B cell (primary cell): ENCODE measurements at regions of chr15 and their contacts with region 1.

Region 1: GRCh38 chr15:90320061-90320884 is 31.8 kb upstream of the ZNF774 start:
- DNase-seq: peak; percentile 84
- ATAC-seq: peak; percentile 98
- H3K4me3 ChIP-seq: peak overlapping the region in 1 of 5 experiments; percentile 9
- H3K4me3 Mint-ChIP-seq: peak overlapping the region; percentile 2
- H3K27ac ChIP-seq: no peak overlapping the region
- H3K27ac Mint-ChIP-seq: no peak overlapping the region
- H3K4me1 ChIP-seq: peaks cover 3 to 7% of the 10 kb centered on the region in 2 donors
- H3K4me1 Mint-ChIP-seq: peaks cover 5% of the 10 kb centered on the region
- H3K27me3 ChIP-seq: no peaks in the 10 kb centered on the region
- H3K27me3 Mint-ChIP-seq: no peaks in the 10 kb centered on the region
- CTCF ChIP-seq: peak; percentile 95

Region 2: GRCh38 chr15:90221246-90221900 is 98.9 kb before region 1 on chr15:
- CTCF ChIA-PET with region 1: no interaction called
- POLR2A ChIA-PET with region 1: no interaction called
- intact Hi-C with region 1: no loop called
- DNase-seq: no peak
- ATAC-seq: no peak
- H3K4me3 ChIP-seq: no peak overlapping the region
- H3K4me3 Mint-ChIP-seq: peak overlapping the region; percentile 23
- H3K27ac ChIP-seq: peak overlapping the region in 1 of 2 donors; percentile 39
- H3K27ac Mint-ChIP-seq: peak overlapping the region; percentile 72
- H3K4me1 ChIP-seq: peaks cover 41 to 50% of the 10 kb centered on the region in 2 donors
- H3K4me1 Mint-ChIP-seq: peaks cover 52% of the 10 kb centered on the region
- H3K27me3 ChIP-seq: no peaks in the 10 kb centered on the region
- H3K27me3 Mint-ChIP-seq: no peaks in the 10 kb centered on the region
- CTCF ChIP-seq: peak; percentile 36

Region 3: DNA sequence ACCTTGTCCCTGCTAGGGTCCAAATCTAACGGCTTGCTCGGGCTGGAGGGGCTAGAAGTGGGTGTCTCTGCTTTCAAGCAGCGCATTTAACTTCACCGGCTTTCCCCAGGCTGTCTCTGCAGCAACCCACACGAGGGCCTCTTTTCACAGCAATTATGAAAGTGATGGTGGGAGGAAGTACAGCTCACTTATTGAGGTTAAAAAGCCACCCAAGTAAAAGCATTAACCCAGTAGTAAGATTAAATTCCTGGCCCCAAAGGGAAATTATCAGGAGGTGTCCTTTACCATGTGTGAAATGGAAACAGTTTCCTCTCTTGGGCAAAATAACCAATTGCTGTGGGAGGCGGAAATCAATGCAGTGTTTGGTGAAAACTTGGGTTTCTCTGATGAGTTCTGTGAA is 13.7 kb before region 1 on chr15:
- CTCF ChIA-PET with region 1: interaction called, 48 read pairs
- POLR2A ChIA-PET with region 1: no interaction called
- intact Hi-C with region 1: no loop called
- DNase-seq: no peak
- ATAC-seq: no peak
- H3K4me3 ChIP-seq: no peak overlapping the region
- H3K4me3 Mint-ChIP-seq: no peak overlapping the region
- H3K27ac ChIP-seq: no peak overlapping the region
- H3K27ac Mint-ChIP-seq: peak overlapping the region; percentile 15
- H3K4me1 ChIP-seq: peaks cover 7 to 9% of the 10 kb centered on the region in 2 donors
- H3K4me1 Mint-ChIP-seq: peaks cover 12% of the 10 kb centered on the region
- H3K27me3 ChIP-seq: no peaks in the 10 kb centered on the region
- H3K27me3 Mint-ChIP-seq: no peaks in the 10 kb centered on the region
- CTCF ChIP-seq: no peak

Region 4: GRCh38 chr15:90362936-90363212 is 42.6 kb after region 1 on chr15:
- CTCF ChIA-PET with region 1: interaction called, 18 read pairs
- POLR2A ChIA-PET with region 1: no interaction called
- intact Hi-C with region 1: no loop called
- DNase-seq: no peak
- ATAC-seq: no peak
- H3K4me3 ChIP-seq: no peak overlapping the region
- H3K4me3 Mint-ChIP-seq: no peak overlapping the region
- H3K27ac ChIP-seq: no peak overlapping the region
- H3K27ac Mint-ChIP-seq: no peak overlapping the region
- H3K4me1 ChIP-seq: peaks cover 5 to 9% of the 10 kb centered on the region in 2 donors
- H3K4me1 Mint-ChIP-seq: peaks cover 4% of the 10 kb centered on the region
- H3K27me3 ChIP-seq: no peaks in the 10 kb centered on the region
- H3K27me3 Mint-ChIP-seq: no peaks in the 10 kb centered on the region
- CTCF ChIP-seq: no peak

Region 5: GRCh38 chr15:90451053-90451850 is 131.0 kb after region 1 on chr15:
- CTCF ChIA-PET with region 1: interaction called, 13 read pairs
- POLR2A ChIA-PET with region 1: no interaction called
- intact Hi-C with region 1: no loop called
- DNase-seq: no peak
- ATAC-seq: no peak
- H3K4me3 ChIP-seq: no peak overlapping the region
- H3K4me3 Mint-ChIP-seq: no peak overlapping the region
- H3K27ac ChIP-seq: no peak overlapping the region
- H3K27ac Mint-ChIP-seq: no peak overlapping the region
- H3K4me1 ChIP-seq: no peaks in the 10 kb centered on the region
- H3K4me1 Mint-ChIP-seq: no peaks in the 10 kb centered on the region
- H3K27me3 ChIP-seq: no peaks in the 10 kb centered on the region
- H3K27me3 Mint-ChIP-seq: no peaks in the 10 kb centered on the region
- CTCF ChIP-seq: no peak

Region 6: GRCh38 chr15:90482124-90483011 is 162.1 kb after region 1 on chr15:
- CTCF ChIA-PET with region 1: interaction called, 89 read pairs
- POLR2A ChIA-PET with region 1: no interaction called
- intact Hi-C with region 1: loop called (anchors 1 kb)
- DNase-seq: peak; percentile 62
- ATAC-seq: no peak
- H3K4me3 ChIP-seq: no peak overlapping the region
- H3K4me3 Mint-ChIP-seq: no peak overlapping the region
- H3K27ac ChIP-seq: no peak overlapping the region
- H3K27ac Mint-ChIP-seq: peak overlapping the region; percentile 28
- H3K4me1 ChIP-seq: peaks cover 34 to 45% of the 10 kb centered on the region in 2 donors
- H3K4me1 Mint-ChIP-seq: peaks cover 35% of the 10 kb centered on the region
- H3K27me3 ChIP-seq: no peaks in the 10 kb centered on the region
- H3K27me3 Mint-ChIP-seq: no peaks in the 10 kb centered on the region
- CTCF ChIP-seq: peak; percentile 78

Region 7: DNA sequence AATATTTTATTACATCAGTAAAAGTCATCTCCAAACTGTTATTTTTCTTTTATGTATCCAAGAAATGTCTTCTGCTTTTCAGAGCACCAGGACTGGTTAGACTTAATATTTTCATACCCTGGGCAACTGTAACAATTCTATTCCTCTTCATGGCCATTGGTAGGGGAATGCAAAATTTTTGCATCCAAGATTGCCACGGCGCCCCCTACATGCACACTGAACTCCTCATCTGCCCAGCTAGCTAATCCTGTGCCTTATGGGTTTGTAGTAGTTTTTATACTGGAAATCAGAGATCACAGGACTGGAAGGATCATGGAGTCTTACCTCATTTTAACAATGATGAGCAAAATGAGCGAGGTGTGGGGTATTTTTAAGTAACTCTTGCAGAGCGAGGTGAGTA is 283.6 kb after region 1 on chr15:
- CTCF ChIA-PET with region 1: interaction called, 16 read pairs
- POLR2A ChIA-PET with region 1: no interaction called
- intact Hi-C with region 1: no loop called
- DNase-seq: peak; percentile 46
- ATAC-seq: no peak
- H3K4me3 ChIP-seq: no peak overlapping the region
- H3K4me3 Mint-ChIP-seq: no peak overlapping the region
- H3K27ac ChIP-seq: no peak overlapping the region
- H3K27ac Mint-ChIP-seq: no peak overlapping the region
- H3K4me1 ChIP-seq: peaks cover 18 to 28% of the 10 kb centered on the region in 2 donors
- H3K4me1 Mint-ChIP-seq: peaks cover 32% of the 10 kb centered on the region
- H3K27me3 ChIP-seq: no peaks in the 10 kb centered on the region
- H3K27me3 Mint-ChIP-seq: no peaks in the 10 kb centered on the region
- CTCF ChIP-seq: peak; percentile 52

Region 8: GRCh38 chr15:90862964-90863778 is 542.9 kb after region 1 on chr15:
- CTCF ChIA-PET with region 1: no interaction called
- POLR2A ChIA-PET with region 1: no interaction called
- intact Hi-C with region 1: no loop called
- DNase-seq: no peak
- ATAC-seq: no peak
- H3K4me3 ChIP-seq: no peak overlapping the region
- H3K4me3 Mint-ChIP-seq: no peak overlapping the region
- H3K27ac ChIP-seq: no peak overlapping the region
- H3K27ac Mint-ChIP-seq: peak overlapping the region; percentile 62
- H3K4me1 ChIP-seq: peaks cover under 1 to 11% of the 10 kb centered on the region in 2 donors
- H3K4me1 Mint-ChIP-seq: peaks cover 14% of the 10 kb centered on the region
- H3K27me3 ChIP-seq: no peaks in the 10 kb centered on the region
- H3K27me3 Mint-ChIP-seq: no peaks in the 10 kb centered on the region
- CTCF ChIP-seq: no peak

Region 9: GRCh38 chr15:91142114-91142731 is 822.0 kb after region 1 on chr15:
- CTCF ChIA-PET with region 1: no interaction called
- POLR2A ChIA-PET with region 1: no interaction called
- intact Hi-C with region 1: no loop called
- DNase-seq: peak; percentile 9
- ATAC-seq: peak; percentile 24
- H3K4me3 ChIP-seq: no peak overlapping the region
- H3K4me3 Mint-ChIP-seq: no peak overlapping the region
- H3K27ac ChIP-seq: no peak overlapping the region
- H3K27ac Mint-ChIP-seq: no peak overlapping the region
- H3K4me1 ChIP-seq: no peaks in the 10 kb centered on the region
- H3K4me1 Mint-ChIP-seq: peaks cover 1% of the 10 kb centered on the region
- H3K27me3 ChIP-seq: peaks cover 0 to 2% (median 0%) of the 10 kb centered on the region in 4 experiments
- H3K27me3 Mint-ChIP-seq: peaks cover 33% of the 10 kb centered on the region
- CTCF ChIP-seq: peak; percentile 64